ENCODE measurements at regions of chr11 and their contacts with region 1.

Region 1: DNA sequence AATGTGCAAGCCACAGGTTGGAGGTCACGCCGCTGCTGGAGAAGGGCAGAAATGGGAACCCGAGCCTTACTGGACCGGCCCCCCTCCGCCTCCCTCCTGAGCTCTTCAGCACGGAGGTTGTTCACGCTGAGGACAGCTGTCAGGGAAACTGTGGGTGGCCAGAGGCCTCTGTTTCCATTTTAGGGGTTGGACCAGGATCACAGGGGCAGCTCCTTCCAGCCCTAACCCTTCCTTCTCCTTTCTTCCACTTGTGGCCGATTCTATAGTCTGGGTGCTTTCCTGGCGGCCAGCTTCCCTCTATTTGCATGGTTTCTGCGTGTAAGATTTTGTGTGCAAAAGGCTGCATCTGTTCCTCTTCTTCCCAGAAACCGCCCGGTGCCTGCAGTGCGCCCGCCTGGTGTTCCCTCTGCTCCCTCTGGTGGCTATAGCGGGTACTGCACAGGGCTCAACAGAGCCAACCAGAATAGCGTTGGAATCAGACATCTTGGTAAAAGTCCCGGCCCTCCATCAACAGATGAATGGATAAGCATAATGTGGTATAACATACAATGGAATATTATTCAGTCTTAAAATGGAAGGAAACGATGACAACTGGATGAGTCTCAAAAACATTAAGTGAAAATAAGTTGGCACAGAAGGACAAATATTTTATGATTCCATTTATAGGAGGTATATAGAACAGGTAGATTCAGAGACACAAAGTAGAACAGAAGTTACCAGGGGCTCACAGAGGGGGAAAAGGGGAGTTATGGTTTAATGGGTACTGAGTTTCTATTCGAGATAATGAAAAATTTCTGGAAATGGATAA is 8.4 kb upstream of the SLC22A8 start:
- DNase-seq: peak; percentile 84 to 89
- H3K4me3 ChIP-seq: no peak overlapping the region
- H3K4me3 Mint-ChIP-seq: no peak overlapping the region
- H3K27ac Mint-ChIP-seq: no peak overlapping the region
- H3K4me1 ChIP-seq: peaks cover 8% of the 10 kb centered on the region
- H3K4me1 Mint-ChIP-seq: peaks cover 6% of the 10 kb centered on the region
- H3K27me3 ChIP-seq: no peaks in the 10 kb centered on the region
- H3K27me3 Mint-ChIP-seq: no peaks in the 10 kb centered on the region
- CTCF ChIP-seq: peak; percentile 98 to 100

Region 2: GRCh38 chr11:62787005-62787759 is 236.9 kb before region 1 on chr11 and contains the start of gene TMEM179B:
- CTCF ChIA-PET with region 1: no interaction called
- POLR2A ChIA-PET with region 1: no interaction called
- intact Hi-C with region 1: no loop called
- DNase-seq: peak; percentile 98
- H3K4me3 ChIP-seq: peak within 1 kb of the TSS; percentile 79
- H3K4me3 Mint-ChIP-seq: peak within 1 kb of the TSS; percentile 91
- H3K27ac Mint-ChIP-seq: peak within 1 kb of the TSS; percentile 95
- H3K4me1 ChIP-seq: peaks cover 7% of the 10 kb centered on the region
- H3K4me1 Mint-ChIP-seq: peaks cover 9% of the 10 kb centered on the region
- H3K27me3 ChIP-seq: no peaks in the 10 kb centered on the region
- H3K27me3 Mint-ChIP-seq: no peaks in the 10 kb centered on the region
- CTCF ChIP-seq: peak; percentile 24 to 82
- total RNA-seq, gene TMEM179B: 59.9 and 68.4 TPM in 2 replicates

Region 3: GRCh38 chr11:62905927-62906531 is 118.0 kb before region 1 on chr11:
- CTCF ChIA-PET with region 1: interaction called, 103 read pairs
- POLR2A ChIA-PET with region 1: no interaction called
- intact Hi-C with region 1: loop called (anchors 1 kb)
- DNase-seq: peak; percentile 84 to 88
- H3K4me3 ChIP-seq: no peak overlapping the region
- H3K4me3 Mint-ChIP-seq: no peak overlapping the region
- H3K27ac Mint-ChIP-seq: no peak overlapping the region
- H3K4me1 ChIP-seq: peaks cover 9% of the 10 kb centered on the region; the same call in 1 of the 2 replicates
- H3K4me1 Mint-ChIP-seq: peaks cover 5% of the 10 kb centered on the region
- H3K27me3 ChIP-seq: no peaks in the 10 kb centered on the region
- H3K27me3 Mint-ChIP-seq: no peaks in the 10 kb centered on the region
- CTCF ChIP-seq: peak; percentile 98 to 99

Region 4: GRCh38 chr11:62921176-62921786 is 102.8 kb before region 1 on chr11 and contains the start of gene CHRM1:
- CTCF ChIA-PET with region 1: interaction called, 11 read pairs
- POLR2A ChIA-PET with region 1: no interaction called
- intact Hi-C with region 1: no loop called
- DNase-seq: no peak
- H3K4me3 ChIP-seq: no peak within 1 kb of the TSS
- H3K4me3 Mint-ChIP-seq: no peak within 1 kb of the TSS
- H3K27ac Mint-ChIP-seq: no peak within 1 kb of the TSS
- H3K4me1 ChIP-seq: peaks cover 17% of the 10 kb centered on the region
- H3K4me1 Mint-ChIP-seq: peaks cover 11% of the 10 kb centered on the region
- H3K27me3 ChIP-seq: no peaks in the 10 kb centered on the region
- H3K27me3 Mint-ChIP-seq: no peaks in the 10 kb centered on the region
- CTCF ChIP-seq: no peak
- total RNA-seq, gene CHRM1: not detected in 2 replicates

Region 5: GRCh38 chr11:62996271-62996670 is 27.8 kb before region 1 on chr11:
- CTCF ChIA-PET with region 1: interaction called, 3 read pairs
- POLR2A ChIA-PET with region 1: no interaction called
- intact Hi-C with region 1: loop called (anchors 1 kb)
- DNase-seq: no peak
- H3K4me3 ChIP-seq: no peak overlapping the region
- H3K4me3 Mint-ChIP-seq: no peak overlapping the region
- H3K27ac Mint-ChIP-seq: no peak overlapping the region
- H3K4me1 ChIP-seq: no peaks in the 10 kb centered on the region
- H3K4me1 Mint-ChIP-seq: no peaks in the 10 kb centered on the region
- H3K27me3 ChIP-seq: no peaks in the 10 kb centered on the region
- H3K27me3 Mint-ChIP-seq: peaks cover 5% of the 10 kb centered on the region
- CTCF ChIP-seq: no peak

Measured in Caco-2 (cell line).